K562 (cell line): ENCODE measurements at regions of chr22 and their contacts with region 1.

Region 1: DNA sequence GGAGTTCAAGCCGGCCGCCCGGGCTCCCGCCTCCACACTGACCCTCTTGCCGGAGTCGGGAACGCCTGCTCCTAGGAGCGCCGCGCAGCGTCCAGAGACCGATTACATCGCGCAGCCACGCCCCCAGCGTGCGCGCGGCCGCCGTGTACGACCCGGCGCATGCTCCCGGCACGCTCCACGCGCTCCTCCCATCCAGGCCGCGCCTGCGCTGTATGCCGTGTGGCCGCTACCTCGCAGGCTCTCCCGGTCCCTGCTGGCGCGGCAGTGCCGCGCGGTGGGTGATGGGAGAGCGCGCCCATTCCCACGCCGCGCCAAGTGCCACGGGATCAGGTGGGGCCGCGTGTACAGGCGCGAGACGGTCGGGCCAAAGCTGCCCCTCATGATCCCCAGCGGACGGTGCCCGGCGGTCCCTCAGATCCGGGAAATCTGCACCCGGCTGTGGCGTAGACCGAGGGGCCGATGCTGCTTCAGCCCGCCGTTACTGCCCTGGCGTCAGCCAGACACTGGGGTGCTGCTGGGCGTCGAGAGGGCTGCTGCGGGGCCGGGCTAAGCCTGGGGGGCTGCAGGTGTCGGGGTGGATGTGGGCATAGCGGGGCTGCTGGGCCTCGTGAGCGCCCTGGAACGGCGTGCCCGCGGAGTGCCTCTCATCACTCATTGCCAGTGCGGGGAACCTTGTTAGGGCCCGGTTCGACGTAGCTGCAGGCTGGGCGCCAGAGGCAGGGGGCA is at the starts of genes GNB1L and RTL10:
- DNase-seq: peak; percentile 100
- ATAC-seq: peak; percentile 92
- H3K4me3 ChIP-seq: peak within 1 kb of the TSS; percentile 62
- H3K27ac ChIP-seq: peak within 1 kb of the TSS; percentile 84
- H3K4me1 ChIP-seq: peaks cover 23 to 63% of the 10 kb centered on the region in 2 experiments
- H3K27me3 ChIP-seq: no peaks in the 10 kb centered on the region
- CTCF ChIP-seq: peak; percentile 29 to 50 (median 49); a peak in 5 of 6 replicates
- EP300 ChIP-seq: peak; percentile 57
- POLR2A ChIP-seq: no peak
- RAD21 ChIP-seq: 0 out of 4 replicates have a peak, but pooled peaks of 1 of the 2 experiments have one; percentile 46
- polyA plus RNA-seq, gene GNB1L: 0.56 to 3.5 TPM
- polyA plus RNA-seq, gene RTL10: 23.6 to 33.7 TPM

Region 2: GRCh38 chr22:19756288-19757128 is 98.4 kb before region 1 on chr22:
- CTCF ChIA-PET with region 1: interaction called, 3 read pairs
- POLR2A ChIA-PET with region 1: interaction called, 7 read pairs
- in situ Hi-C with region 1: no loop called
- intact Hi-C with region 1: loop called (anchors 1 kb)
- DNase-seq: peak; percentile 95 to 99 (median 99)
- ATAC-seq: peak; percentile 87
- H3K4me3 ChIP-seq: peak overlapping the region; percentile 29
- H3K27ac ChIP-seq: no peak overlapping the region
- H3K4me1 ChIP-seq: peaks cover 17 to 82% of the 10 kb centered on the region in 2 experiments; a peak in 4 of 5 replicates
- H3K27me3 ChIP-seq: peaks cover 51 to 78% of the 10 kb centered on the region in 2 experiments; a peak in 4 of 5 replicates
- CTCF ChIP-seq: peak; percentile 98 to 99 (median 98)
- EP300 ChIP-seq: peak; percentile 42; the same call in 1 of the 2 replicates
- POLR2A ChIP-seq: no peak
- RAD21 ChIP-seq: peak in 1 of 2 experiments; percentile 100; a peak in 3 of 4 replicates

Region 3: GRCh38 chr22:19800761-19801244 is 54.1 kb before region 1 on chr22:
- CTCF ChIA-PET with region 1: no interaction called
- POLR2A ChIA-PET with region 1: interaction called, 4 read pairs
- in situ Hi-C with region 1: no loop called
- intact Hi-C with region 1: loop called (anchors 5 kb)
- DNase-seq: peak in 3 of 4 experiments; percentile 60 to 76 (median 74)
- ATAC-seq: peak; percentile 68
- H3K4me3 ChIP-seq: no peak overlapping the region
- H3K27ac ChIP-seq: no peak overlapping the region
- H3K4me1 ChIP-seq: peaks cover under 1 to 68% of the 10 kb centered on the region in 2 experiments; a peak in 4 of 5 replicates
- H3K27me3 ChIP-seq: no peaks in the 10 kb centered on the region
- CTCF ChIP-seq: peak; percentile 71 to 79 (median 76)
- EP300 ChIP-seq: no peak
- POLR2A ChIP-seq: no peak
- RAD21 ChIP-seq: peak in 1 of 2 experiments; percentile 59; a peak in 2 of 4 replicates

Region 4: GRCh38 chr22:19832476-19833108 is 22.3 kb before region 1 on chr22:
- CTCF ChIA-PET with region 1: no interaction called
- POLR2A ChIA-PET with region 1: interaction called, 247 read pairs
- in situ Hi-C with region 1: no loop called
- intact Hi-C with region 1: no loop called
- DNase-seq: no peak
- ATAC-seq: peak; percentile 57
- H3K4me3 ChIP-seq: no peak overlapping the region
- H3K27ac ChIP-seq: no peak overlapping the region
- H3K4me1 ChIP-seq: peaks cover 0 to 8% of the 10 kb centered on the region in 2 experiments; a peak in 3 of 5 replicates
- H3K27me3 ChIP-seq: no peaks in the 10 kb centered on the region
- CTCF ChIP-seq: no peak
- EP300 ChIP-seq: no peak
- POLR2A ChIP-seq: no peak
- RAD21 ChIP-seq: no peak

Region 5: GRCh38 chr22:19874307-19875060 is 19.5 kb after region 1 on chr22:
- CTCF ChIA-PET with region 1: no interaction called
- POLR2A ChIA-PET with region 1: interaction called, 22 read pairs
- in situ Hi-C with region 1: no loop called
- intact Hi-C with region 1: no loop called
- DNase-seq: no peak
- ATAC-seq: peak; percentile 8
- H3K4me3 ChIP-seq: no peak overlapping the region
- H3K27ac ChIP-seq: no peak overlapping the region
- H3K4me1 ChIP-seq: peaks cover 8 to 95% of the 10 kb centered on the region in 2 experiments; a peak in 4 of 5 replicates
- H3K27me3 ChIP-seq: peaks cover 0 to 20% of the 10 kb centered on the region in 2 experiments; a peak in 2 of 5 replicates
- CTCF ChIP-seq: no peak
- EP300 ChIP-seq: peak; percentile 3; the same call in 1 of the 2 replicates
- POLR2A ChIP-seq: no peak
- RAD21 ChIP-seq: no peak

Region 6: GRCh38 chr22:20080776-20081654 is 226.1 kb after region 1 on chr22:
- CTCF ChIA-PET with region 1: no interaction called
- POLR2A ChIA-PET with region 1: no interaction called
- in situ Hi-C with region 1: no loop called
- intact Hi-C with region 1: no loop called
- DNase-seq: peak; percentile 74 to 89 (median 79)
- ATAC-seq: peak; percentile 33
- H3K4me3 ChIP-seq: peak overlapping the region; percentile 67
- H3K27ac ChIP-seq: peak overlapping the region; percentile 78
- H3K4me1 ChIP-seq: peaks cover 53 to 74% of the 10 kb centered on the region in 2 experiments
- H3K27me3 ChIP-seq: no peaks in the 10 kb centered on the region
- CTCF ChIP-seq: no peak; a peak in 2 of 6 replicates
- EP300 ChIP-seq: no peak; the same call in 1 of the 2 replicates
- POLR2A ChIP-seq: no peak
- RAD21 ChIP-seq: peak in 1 of 2 experiments; percentile 30; a peak in 2 of 4 replicates

Region 7: GRCh38 chr22:20116951-20117645 is 262.2 kb after region 1 on chr22 and contains the start of gene TRMT2A:
- CTCF ChIA-PET with region 1: no interaction called
- POLR2A ChIA-PET with region 1: no interaction called
- in situ Hi-C with region 1: no loop called
- intact Hi-C with region 1: loop called (anchors 2 kb)
- DNase-seq: peak; percentile 100
- ATAC-seq: peak; percentile 88
- H3K4me3 ChIP-seq: peak within 1 kb of the TSS; percentile 63
- H3K27ac ChIP-seq: peak within 1 kb of the TSS; percentile 94
- H3K4me1 ChIP-seq: peaks cover 25 to 90% of the 10 kb centered on the region in 2 experiments
- H3K27me3 ChIP-seq: no peaks in the 10 kb centered on the region
- CTCF ChIP-seq: peak; percentile 56 to 62 (median 57); a peak in 4 of 6 replicates
- EP300 ChIP-seq: peak; percentile 89
- POLR2A ChIP-seq: peak; percentile 90
- RAD21 ChIP-seq: peak in 1 of 2 experiments; percentile 49; a peak in 2 of 4 replicates
- polyA plus RNA-seq, gene TRMT2A: 1.6 to 6.6 TPM